Dorsolateral prefrontal cortex (tissue), 120 donors: ENCODE measurements at regions of chr19 and their contacts with region 1.

Region 1: DNA sequence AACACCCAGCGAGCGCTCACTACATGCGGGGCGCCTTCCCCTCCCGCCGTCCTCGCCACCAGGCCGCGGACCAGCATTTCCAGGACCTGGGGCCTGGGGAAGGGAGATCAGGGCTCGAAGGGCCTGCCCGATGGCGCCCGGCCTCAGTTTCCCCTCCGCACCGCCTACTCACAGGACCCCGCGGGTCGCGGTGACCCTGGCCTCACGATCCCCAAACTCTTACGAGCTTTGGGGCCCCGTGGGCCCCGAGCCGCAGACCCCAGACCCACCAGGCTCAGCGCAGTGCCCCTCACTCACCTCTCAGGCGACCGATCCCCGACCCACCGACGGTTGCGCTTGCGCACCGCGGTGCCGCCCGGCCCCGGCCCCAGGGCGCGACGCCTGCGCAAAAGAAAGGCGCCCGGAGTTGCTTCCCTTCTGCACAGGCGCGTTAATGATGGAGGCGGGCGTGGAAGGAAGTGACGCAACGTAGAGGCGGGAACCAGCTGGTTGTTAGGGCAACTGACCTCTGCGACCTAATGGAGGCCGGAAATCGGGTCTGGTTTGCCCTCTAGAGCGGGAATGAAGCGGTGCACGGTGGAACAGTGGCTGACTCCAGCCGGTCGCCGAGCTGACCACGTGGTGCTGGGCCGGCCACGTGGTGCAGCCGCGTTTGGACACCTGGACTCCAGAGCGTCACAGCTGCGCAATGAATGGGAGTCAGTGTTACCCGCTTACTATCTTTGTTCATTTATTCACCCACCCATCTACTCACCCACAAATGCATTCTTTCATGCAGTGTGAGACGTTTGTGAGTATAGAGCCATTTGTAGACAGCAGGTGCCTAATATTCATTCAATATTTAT is at the start of gene SGTA:
- DNase-seq: peak; percentile 97 to 99 (median 99)
- H3K4me3 ChIP-seq: peak within 1 kb of the TSS; percentile 66 to 100 (median 98)
- H3K27ac ChIP-seq: peak within 1 kb of the TSS; percentile 81 to 100 (median 96)
- H3K27me3 ChIP-seq: no peaks in the 10 kb centered on the region
- CTCF ChIP-seq: peak; percentile 17 to 73 (median 58)
- total RNA-seq, gene SGTA: 61.3 to 107 (median 73.1) TPM

Region 2: GRCh38 chr19:2345794-2346663 is 437.1 kb before region 1 on chr19:
- intact Hi-C with region 1: no loop called
- DNase-seq: peak in 1 of 10 donors; percentile 45
- H3K4me3 ChIP-seq: no peak overlapping the region
- H3K27ac ChIP-seq: peak overlapping the region in 32 of 59 donors; percentile 3 to 67 (median 40)
- H3K27me3 ChIP-seq: no peaks in the 10 kb centered on the region
- CTCF ChIP-seq: no peak

Region 3: DNA sequence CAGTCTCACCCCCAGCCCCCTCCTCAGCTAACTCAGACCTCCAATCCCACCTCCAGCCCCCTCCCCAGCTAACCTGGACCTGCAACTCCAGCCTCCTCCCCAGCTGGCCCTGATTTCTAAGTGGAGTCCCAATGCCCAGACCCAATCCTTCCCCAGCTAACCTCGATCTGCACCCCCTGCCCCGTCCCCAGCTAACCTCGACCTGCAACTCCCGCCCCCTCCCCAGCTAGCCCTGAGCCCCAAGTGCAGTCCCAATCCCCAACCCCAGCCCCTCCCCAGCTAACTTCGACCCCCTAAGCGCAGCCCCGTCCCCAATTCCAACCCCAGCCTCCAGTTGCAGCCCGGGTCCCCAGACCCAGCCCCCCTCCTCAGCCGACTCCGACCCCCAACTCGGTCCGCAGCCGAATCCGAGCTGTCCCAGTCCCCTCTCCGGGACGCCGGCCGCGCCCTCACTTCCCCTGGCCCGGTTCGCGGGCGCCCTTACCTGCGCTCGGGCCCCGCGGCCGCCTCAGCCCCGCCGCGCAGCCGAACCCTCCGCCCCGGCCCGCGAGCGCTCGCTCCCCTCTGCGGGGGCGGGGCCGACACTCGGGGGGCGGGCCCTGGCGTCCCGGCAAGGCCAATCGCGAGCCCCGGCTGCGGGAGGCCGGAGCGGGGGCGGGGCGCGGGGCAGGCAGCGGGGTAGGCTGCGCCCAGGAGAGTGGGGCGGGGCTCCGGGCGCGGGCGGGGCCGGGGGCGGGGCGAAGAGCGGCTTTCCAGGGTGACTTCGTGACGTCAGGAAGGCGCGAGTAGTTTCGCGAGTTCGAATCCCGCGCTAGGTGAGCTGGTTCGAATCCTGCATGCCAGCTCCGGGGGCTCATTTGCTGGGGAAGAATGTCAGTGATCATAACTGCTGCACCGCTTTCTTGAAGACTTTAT is 80.7 kb before region 1 on chr19 and contains the start of gene GNG7:
- intact Hi-C with region 1: loop called in 1 of 2 experiments (anchors 5 kb)
- DNase-seq: peak; percentile 86 to 99 (median 94)
- H3K4me3 ChIP-seq: peak within 1 kb of the TSS; percentile 15 to 76 (median 63)
- H3K27ac ChIP-seq: peak within 1 kb of the TSS in 45 of 59 donors; percentile 18 to 99 (median 70)
- H3K27me3 ChIP-seq: no peaks in the 10 kb centered on the region
- CTCF ChIP-seq: peak in 3 of 56 donors; percentile 7 to 23 (median 19)
- total RNA-seq, gene GNG7: 71.9 to 184 (median 98.1) TPM

Region 4: GRCh38 chr19:2750808-2751443 is 32.2 kb before region 1 on chr19:
- intact Hi-C with region 1: loop called in 1 of 2 experiments (anchors 5 kb)
- DNase-seq: no peak
- H3K4me3 ChIP-seq: no peak overlapping the region
- H3K27ac ChIP-seq: peak overlapping the region in 54 of 59 donors; percentile 7 to 85 (median 66)
- H3K27me3 ChIP-seq: no peaks in the 10 kb centered on the region
- CTCF ChIP-seq: no peak

Region 5: GRCh38 chr19:2840794-2841790 is 57.9 kb after region 1 on chr19 and contains the start of gene ZNF555:
- intact Hi-C with region 1: loop called in 1 of 2 experiments (anchors 2 kb)
- DNase-seq: peak; percentile 99 to 100 (median 100)
- H3K4me3 ChIP-seq: peak within 1 kb of the TSS; percentile 61 to 98 (median 87)
- H3K27ac ChIP-seq: peak within 1 kb of the TSS; percentile 30 to 97 (median 87)
- H3K27me3 ChIP-seq: no peaks in the 10 kb centered on the region
- CTCF ChIP-seq: peak in 55 of 56 donors; percentile 48 to 83 (median 68)
- total RNA-seq, gene ZNF555: 7.6 to 20.2 (median 12.8) TPM